Heart left ventricle (tissue), 16 donors: ENCODE measurements at regions of chr11 and their contacts with region 1.

Region 1: DNA sequence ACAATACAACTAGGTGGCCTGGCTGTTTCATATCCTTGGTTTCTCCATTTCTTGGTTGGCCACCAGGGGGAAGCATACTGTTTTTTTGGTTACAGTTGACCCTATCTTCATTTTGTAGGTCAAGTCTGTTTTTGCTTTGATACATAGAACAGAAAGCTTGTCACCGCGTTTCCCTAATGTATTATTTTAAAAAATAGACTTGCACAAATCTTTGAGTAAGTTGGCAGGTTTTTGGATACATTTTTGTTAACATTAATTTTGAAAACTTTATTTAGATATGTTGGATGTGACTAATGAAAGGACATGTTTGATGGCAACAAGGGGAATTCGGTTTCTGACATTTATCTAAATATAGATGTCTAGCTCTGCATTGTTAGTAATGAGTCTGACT is 3.0 kb downstream of the NCR3LG1 start:
- DNase-seq: peak in 4 of 5 donors; percentile 35 to 65 (median 52)
- ATAC-seq: peak in 3 of 4 donors; percentile 48 to 62 (median 53)
- H3K4me3 ChIP-seq: peak overlapping the region in 4 of 12 donors; percentile 56 to 79 (median 70)
- H3K27ac ChIP-seq: no peak overlapping the region
- H3K4me1 ChIP-seq: peaks cover 0 to 34% (median 13%) of the 10 kb centered on the region in 12 donors
- H3K27me3 ChIP-seq: no peaks in the 10 kb centered on the region
- CTCF ChIP-seq: peak; percentile 49 to 78 (median 72)
- POLR2A ChIP-seq: no peak

Region 2: DNA sequence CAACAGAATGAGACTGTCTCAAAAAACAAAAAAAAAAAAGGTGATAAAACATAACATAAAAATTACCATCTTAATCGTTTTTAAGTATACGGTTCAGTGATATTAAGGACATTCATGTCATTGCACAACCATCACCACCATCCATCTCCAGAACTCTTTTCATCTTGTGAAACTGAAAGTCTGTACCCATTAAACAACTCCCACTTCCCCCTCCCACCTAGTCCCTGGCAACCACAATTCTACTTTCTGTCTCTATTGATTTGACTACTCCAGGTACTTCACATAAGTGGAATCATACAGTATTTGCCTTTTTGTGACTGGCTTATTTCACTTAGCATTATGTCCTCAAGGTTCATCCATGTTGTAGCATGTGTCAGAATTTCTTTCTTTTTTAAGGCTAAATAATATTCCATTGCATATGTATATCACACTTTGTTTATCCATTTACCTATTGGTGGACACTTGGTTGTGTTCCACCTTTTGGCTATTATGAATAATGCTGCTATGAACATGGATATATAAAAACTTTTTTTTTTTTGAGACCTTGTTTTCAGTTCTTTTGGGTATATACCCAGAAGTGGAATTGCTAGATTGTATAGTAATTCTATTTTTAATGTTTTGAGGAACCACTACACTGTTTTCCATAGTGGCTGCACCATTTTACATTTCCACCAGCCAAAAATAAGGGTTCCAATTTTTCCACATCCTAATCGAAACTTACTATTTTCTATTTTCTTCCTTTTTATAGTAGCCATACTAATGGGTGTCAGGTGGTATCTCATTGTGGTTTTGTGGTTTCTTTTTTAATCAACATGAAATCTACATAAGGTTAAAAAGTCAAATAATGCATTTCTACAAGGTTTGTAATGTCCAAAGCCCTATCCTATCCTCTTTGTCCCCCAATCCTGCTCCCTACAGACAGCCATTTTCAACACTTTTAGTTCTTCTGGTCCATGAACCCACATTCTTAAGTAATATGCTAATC is 123.4 kb before region 1 on chr11:
- intact Hi-C with region 1: loop called in 2 of 10 experiments (anchors 5 to 10 kb)
- DNase-seq: no peak
- ATAC-seq: no peak
- H3K4me3 ChIP-seq: no peak overlapping the region
- H3K27ac ChIP-seq: no peak overlapping the region
- H3K4me1 ChIP-seq: peaks cover 0 to 7% (median 0%) of the 10 kb centered on the region in 12 donors
- H3K27me3 ChIP-seq: no peaks in the 10 kb centered on the region
- CTCF ChIP-seq: no peak
- POLR2A ChIP-seq: no peak

Region 3: GRCh38 chr11:17276236-17277023 is 78.2 kb before region 1 on chr11 and contains the start of gene NUCB2:
- intact Hi-C with region 1: loop called in 2 of 10 experiments (anchors 2 to 5 kb)
- DNase-seq: peak; percentile 98 to 99 (median 98)
- ATAC-seq: peak; percentile 98 to 99 (median 99)
- H3K4me3 ChIP-seq: peak within 1 kb of the TSS; percentile 66 to 97 (median 86)
- H3K27ac ChIP-seq: peak within 1 kb of the TSS; percentile 76 to 96 (median 90)
- H3K4me1 ChIP-seq: peaks cover 0 to 45% (median 9%) of the 10 kb centered on the region in 12 donors
- H3K27me3 ChIP-seq: no peaks in the 10 kb centered on the region
- CTCF ChIP-seq: peak in 1 of 12 donors; percentile 2
- POLR2A ChIP-seq: peak in 1 of 2 donors; percentile 92
- total RNA-seq, gene NUCB2: 41.4 to 180 (median 85.4) TPM

Region 4: DNA sequence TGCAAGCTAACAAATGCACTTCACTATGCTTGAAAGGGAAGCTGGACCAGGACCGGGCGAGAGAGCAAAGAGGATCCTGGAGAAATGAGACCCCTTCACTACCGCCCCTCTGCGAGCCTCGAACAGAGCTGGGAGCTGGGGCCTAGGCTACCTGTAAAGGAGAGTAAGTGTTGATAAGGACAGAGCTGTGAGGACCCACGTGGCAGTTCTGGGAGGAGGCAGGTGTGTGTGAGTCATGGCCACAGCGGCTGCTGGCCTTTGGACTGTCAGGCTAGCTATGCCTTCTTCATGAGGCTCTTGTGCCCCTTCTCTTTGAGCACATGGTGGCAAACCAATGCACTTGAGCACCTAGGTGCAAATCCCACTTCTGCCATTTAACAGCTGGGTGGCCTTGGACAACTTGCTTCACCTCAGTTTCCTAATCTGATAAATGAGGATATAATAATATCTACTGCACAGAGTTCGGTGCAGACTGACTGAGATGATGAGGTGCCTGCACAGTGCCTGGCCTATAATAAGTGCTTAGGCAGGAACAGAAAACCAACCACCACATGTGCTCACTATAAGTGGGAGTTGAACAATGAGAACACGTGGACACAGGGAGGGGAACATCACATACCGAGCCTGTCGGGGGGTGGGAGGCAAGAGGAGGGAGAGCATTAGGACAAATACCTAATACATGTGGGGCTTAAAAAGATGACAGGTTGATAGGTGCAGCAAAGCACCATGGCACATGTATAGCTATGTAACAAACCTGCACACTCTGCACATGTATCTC is 69.1 kb after region 1 on chr11:
- intact Hi-C with region 1: no loop called
- DNase-seq: no peak
- ATAC-seq: no peak
- H3K4me3 ChIP-seq: no peak overlapping the region
- H3K27ac ChIP-seq: no peak overlapping the region
- H3K4me1 ChIP-seq: peaks cover 0 to 7% (median 0%) of the 10 kb centered on the region in 12 donors
- H3K27me3 ChIP-seq: peaks cover 0 to 11% (median 0%) of the 10 kb centered on the region in 9 donors
- CTCF ChIP-seq: no peak
- POLR2A ChIP-seq: no peak